ENCODE measurements at regions of chr4 and their contacts with region 1.

Region 1: GRCh38 chr4:87498446-87498900 is 30.7 kb downstream of the SPARCL1 start:
- DNase-seq: no peak
- ATAC-seq: peak; percentile 47
- H3K4me3 Mint-ChIP-seq: no peak overlapping the region
- H3K27ac Mint-ChIP-seq: no peak overlapping the region
- H3K4me1 Mint-ChIP-seq: peaks cover 17% of the 10 kb centered on the region
- H3K27me3 Mint-ChIP-seq: peaks cover 2% of the 10 kb centered on the region

Region 2: GRCh38 chr4:87150498-87151261 is 347.8 kb before region 1 on chr4:
- CTCF ChIA-PET with region 1: no interaction called
- POLR2A ChIA-PET with region 1: no interaction called
- intact Hi-C with region 1: no loop called
- DNase-seq: peak; percentile 56
- ATAC-seq: peak; percentile 76
- H3K4me3 Mint-ChIP-seq: no peak overlapping the region
- H3K27ac Mint-ChIP-seq: no peak overlapping the region
- H3K4me1 Mint-ChIP-seq: no peaks in the 10 kb centered on the region
- H3K27me3 Mint-ChIP-seq: no peaks in the 10 kb centered on the region

Region 3: DNA sequence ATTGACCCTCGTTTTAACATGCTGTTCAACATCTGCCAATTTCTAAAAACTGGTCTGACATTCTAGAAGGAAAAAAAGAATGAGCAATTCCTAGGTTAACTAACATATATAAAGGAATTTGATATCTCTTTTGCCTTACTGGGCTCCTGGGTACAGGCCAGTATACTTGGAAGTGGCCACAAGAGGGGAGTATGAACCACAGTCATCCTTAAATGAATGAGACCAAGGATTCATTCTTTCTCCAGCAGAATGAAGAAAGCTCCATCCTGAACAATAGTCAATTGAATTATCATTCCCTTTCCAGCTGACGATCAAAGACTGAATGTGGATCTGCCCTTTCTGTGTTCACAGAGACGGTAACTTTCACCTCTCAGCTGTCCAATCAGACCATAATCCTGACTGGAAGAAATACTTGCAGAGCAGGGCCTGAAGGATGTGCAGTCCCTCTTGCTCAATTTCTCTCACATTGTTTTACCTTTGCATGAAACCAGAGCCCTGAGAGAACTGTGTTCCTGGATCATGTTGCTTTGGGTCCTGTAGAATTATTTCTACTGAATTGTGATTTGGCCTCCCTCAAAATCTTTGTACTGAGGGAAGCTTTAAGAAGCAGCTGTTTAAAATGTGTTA is 45.5 kb after region 1 on chr4:
- CTCF ChIA-PET with region 1: no interaction called
- POLR2A ChIA-PET with region 1: no interaction called
- intact Hi-C with region 1: no loop called
- DNase-seq: no peak
- ATAC-seq: no peak
- H3K4me3 Mint-ChIP-seq: no peak overlapping the region
- H3K27ac Mint-ChIP-seq: no peak overlapping the region
- H3K4me1 Mint-ChIP-seq: no peaks in the 10 kb centered on the region
- H3K27me3 Mint-ChIP-seq: peaks cover 5% of the 10 kb centered on the region

Region 4: DNA sequence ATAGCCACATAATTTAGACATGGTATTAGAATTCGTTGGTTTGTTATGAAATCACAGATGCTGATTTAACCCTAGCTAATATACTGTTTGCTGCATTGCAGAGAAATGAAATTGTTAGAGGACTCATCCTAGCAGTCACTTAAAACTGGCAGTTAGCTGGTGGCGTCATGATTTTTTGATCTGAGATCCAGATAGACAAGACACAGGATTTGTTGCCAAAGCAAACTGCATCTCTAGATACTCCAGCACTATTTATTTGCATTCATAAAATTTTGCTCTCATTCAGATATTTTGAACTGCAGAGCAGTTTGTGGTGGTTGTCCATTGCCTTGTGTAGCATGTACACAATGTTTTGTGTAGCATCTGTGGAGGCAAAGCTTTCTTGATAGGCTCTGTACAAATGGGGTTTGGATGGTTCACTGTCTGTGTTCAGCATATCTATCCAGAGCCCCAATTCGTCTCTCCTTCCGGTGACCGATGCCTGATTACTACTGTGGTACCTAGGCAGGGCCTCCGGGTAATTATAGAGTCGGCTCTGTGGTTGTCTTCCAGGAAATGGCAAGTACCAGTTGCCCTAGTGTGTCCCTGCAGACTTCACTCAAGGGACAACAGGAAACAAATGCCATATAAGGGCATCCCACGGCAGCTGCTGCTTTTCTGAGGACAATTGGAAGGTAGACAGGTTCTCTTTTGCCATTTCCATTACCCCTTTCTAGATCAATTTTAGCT is 60.8 kb after region 1 on chr4:
- CTCF ChIA-PET with region 1: no interaction called
- POLR2A ChIA-PET with region 1: no interaction called
- intact Hi-C with region 1: loop called in 1 of 2 experiments (anchors 1 kb)
- DNase-seq: peak; percentile 62
- ATAC-seq: peak; percentile 89
- H3K4me3 Mint-ChIP-seq: no peak overlapping the region
- H3K27ac Mint-ChIP-seq: no peak overlapping the region
- H3K4me1 Mint-ChIP-seq: peaks cover 31% of the 10 kb centered on the region
- H3K27me3 Mint-ChIP-seq: no peaks in the 10 kb centered on the region